ENCODE measurements at regions of chr15 and their contacts with region 1.

Region 1: DNA sequence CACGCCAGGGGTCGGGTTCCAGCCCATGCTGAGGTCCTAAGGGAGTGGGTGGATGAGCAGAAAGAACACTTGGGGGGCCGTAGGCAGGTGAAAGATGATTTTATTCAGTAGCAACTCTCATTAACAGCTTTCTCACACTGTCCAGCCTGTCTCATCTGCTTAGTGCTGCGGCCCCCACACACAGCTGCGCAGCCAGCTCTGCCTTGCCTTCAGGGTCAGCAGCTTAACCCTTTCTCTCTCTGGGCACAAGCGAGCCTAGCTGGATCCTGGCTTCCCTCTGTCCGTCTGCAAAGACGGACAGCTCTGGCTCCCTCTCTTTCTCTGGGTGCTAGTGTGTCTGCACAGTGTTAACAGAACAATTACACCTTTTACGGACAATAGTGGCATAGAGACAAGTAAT is 21.3 kb downstream of the NPAP1 start:
- DNase-seq: no peak
- ATAC-seq: no peak
- H3K4me3 ChIP-seq: no peak overlapping the region
- H3K27ac ChIP-seq: no peak overlapping the region
- H3K4me1 ChIP-seq: no peaks in the 10 kb centered on the region
- H3K27me3 ChIP-seq: no peaks in the 10 kb centered on the region
- CTCF ChIP-seq: no peak
- EP300 ChIP-seq: no peak
- POLR2A ChIP-seq: no peak
- RAD21 ChIP-seq: no peak

Region 2: GRCh38 chr15:24645627-24646026 is 51.2 kb before region 1 on chr15:
- CTCF ChIA-PET with region 1: no interaction called
- POLR2A ChIA-PET with region 1: no interaction called
- RAD21 ChIA-PET with region 1: no interaction called
- SMC1A ChIA-PET with region 1: no interaction called
- in situ Hi-C with region 1: loop called (anchors 10 kb)
- intact Hi-C with region 1: no loop called
- DNase-seq: no peak
- ATAC-seq: no peak
- H3K4me3 ChIP-seq: no peak overlapping the region
- H3K27ac ChIP-seq: no peak overlapping the region
- H3K4me1 ChIP-seq: no peaks in the 10 kb centered on the region
- H3K27me3 ChIP-seq: no peaks in the 10 kb centered on the region
- CTCF ChIP-seq: no peak
- EP300 ChIP-seq: no peak
- POLR2A ChIP-seq: no peak
- RAD21 ChIP-seq: no peak

Region 3: DNA sequence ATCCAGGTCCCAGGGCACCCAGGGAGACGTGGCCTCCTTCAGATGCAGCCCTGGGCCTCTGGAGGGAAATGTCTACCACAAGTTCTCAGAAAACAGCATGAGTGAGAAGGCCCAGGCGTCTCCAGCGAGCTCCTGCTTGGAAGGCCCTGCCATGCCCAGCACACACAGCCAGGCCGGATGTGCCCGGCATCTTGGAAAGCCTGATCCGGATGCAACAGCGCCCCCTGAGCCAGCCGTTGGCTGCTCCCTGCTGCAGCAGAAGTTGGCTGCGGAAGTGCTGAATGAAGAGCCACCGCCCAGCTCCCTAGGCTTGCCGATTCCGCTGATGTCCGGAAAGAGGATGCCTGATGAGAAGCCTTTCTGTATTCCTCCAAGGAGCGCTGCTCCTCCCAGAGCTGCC is 20.4 kb before region 1 on chr15:
- CTCF ChIA-PET with region 1: no interaction called
- POLR2A ChIA-PET with region 1: no interaction called
- RAD21 ChIA-PET with region 1: no interaction called
- SMC1A ChIA-PET with region 1: no interaction called
- in situ Hi-C with region 1: no loop called
- intact Hi-C with region 1: no loop called
- DNase-seq: no peak
- ATAC-seq: no peak
- H3K4me3 ChIP-seq: no peak overlapping the region
- H3K27ac ChIP-seq: no peak overlapping the region
- H3K4me1 ChIP-seq: no peaks in the 10 kb centered on the region
- H3K27me3 ChIP-seq: no peaks in the 10 kb centered on the region
- CTCF ChIP-seq: no peak
- EP300 ChIP-seq: no peak
- POLR2A ChIP-seq: no peak
- RAD21 ChIP-seq: no peak

Measured in GM12878 (cell line).